ENCODE measurements at regions of chr4 and their contacts with region 1.

Region 1: GRCh38 chr4:111641955-111642579 is 503.2 kb upstream of the FAM241A start:
- DNase-seq: no peak
- ATAC-seq: peak; percentile 82

Region 2: DNA sequence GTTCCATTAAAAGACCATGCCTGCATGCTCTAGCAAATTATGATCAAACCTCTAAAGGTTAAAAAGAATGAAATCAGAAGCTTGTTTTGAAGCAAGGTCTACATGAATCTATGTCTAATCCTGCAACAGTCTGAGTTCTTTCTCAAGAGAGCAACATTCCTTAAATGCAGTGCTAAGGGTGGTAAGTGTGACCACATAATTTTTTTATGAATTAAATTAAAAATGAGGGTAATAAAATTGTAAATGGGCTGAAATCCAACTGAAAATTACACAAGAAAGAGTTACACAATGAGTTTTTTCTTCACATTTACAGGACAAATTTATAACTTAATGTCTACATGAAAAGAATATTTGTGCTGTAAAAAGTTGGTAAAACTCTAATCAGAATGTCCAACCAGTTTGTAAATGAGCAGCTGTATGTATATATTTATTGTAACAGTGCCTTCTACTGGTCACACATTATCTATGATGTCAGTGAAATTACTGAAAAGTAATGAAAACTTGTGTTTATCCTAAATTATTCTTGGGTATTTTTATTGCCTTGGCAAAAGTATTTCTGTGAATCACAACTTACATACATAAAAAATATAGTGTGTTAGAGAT is 682.9 kb before region 1 on chr4:
- intact Hi-C with region 1: no loop called
- DNase-seq: no peak
- ATAC-seq: no peak

Region 3: DNA sequence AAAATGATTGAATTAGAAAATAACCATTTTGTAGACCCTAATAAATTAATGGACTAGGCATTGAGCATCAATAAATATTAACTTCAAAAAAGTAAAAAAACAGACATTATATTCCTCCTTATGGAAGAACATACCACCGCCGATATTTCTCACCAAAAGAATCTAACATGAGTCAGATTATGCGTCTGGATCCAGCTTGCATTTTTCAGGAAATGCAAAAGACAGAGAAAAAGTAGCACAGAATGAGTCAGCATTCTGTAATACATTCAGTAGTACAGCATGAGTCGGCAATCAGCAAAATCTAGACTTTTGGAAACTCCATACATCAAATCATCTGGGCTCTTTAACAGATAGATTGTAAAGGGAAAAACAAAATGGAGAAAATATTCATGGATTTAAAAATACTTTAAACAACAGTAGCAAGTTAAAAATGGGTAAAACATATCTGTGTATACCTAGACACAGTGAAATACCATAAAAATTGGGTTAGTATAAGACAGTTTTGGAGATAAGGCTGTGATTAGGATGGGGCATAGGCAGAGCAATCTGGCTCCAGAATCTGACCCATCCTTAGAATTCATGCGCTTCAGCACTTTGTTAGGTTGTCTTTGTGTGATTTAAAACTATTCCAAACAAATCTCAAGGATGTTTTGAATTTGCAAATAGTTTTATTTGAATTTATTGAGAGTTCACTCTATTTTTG is 129.8 kb before region 1 on chr4:
- intact Hi-C with region 1: no loop called
- DNase-seq: no peak
- ATAC-seq: no peak

Region 4: GRCh38 chr4:111854494-111855087 is 212.5 kb after region 1 on chr4:
- intact Hi-C with region 1: loop called (anchors 10 kb)
- DNase-seq: no peak
- ATAC-seq: no peak

Region 5: GRCh38 chr4:112031712-112032328 is 389.8 kb after region 1 on chr4:
- intact Hi-C with region 1: loop called (anchors 5 kb)
- DNase-seq: no peak
- ATAC-seq: no peak

Measured in Right ventricle myocardium inferior (tissue), 1 donor.